ENCODE measurements at regions of chr4 and their contacts with region 1.

Region 1: DNA sequence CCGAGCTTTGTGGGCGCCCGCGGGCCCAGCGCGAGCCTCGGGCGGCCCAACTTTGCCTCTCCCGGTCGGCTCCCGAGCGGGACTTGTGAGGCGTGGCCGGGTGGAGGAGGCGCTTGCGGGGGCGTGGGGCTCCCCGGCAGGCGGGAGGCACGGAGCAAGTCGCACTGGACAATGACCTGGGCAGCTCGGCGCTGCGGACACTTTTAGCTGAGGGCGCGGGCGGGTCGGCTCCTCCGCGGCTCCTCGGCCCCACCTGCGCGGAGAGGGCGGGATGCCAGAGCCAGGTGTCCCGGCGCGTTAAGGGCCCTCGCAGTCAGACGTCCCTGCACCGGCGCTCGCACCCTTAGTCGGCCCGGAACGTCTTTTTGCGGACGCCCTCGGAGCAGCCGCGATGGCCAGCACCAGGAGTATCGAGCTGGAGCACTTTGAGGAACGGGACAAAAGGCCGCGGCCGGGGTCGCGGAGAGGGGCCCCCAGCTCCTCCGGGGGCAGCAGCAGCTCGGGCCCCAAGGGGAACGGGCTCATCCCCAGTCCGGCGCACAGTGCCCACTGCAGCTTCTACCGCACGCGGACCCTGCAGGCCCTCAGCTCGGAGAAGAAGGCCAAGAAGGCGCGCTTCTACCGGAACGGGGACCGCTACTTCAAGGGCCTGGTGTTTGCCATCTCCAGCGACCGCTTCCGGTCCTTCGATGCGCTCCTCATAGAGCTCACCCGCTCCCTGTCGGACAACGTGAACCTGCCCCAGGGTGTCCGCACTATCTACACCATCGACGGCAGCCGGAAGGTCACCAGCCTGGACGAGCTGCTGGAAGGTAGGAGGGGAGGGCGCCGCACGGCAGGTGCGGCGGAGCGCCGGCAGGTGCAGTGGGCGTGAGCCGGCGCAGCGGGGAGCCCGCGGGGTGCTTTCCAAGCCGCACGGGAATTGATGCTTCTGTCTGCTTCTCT is 664 bp downstream of the DCLK2 start:
- DNase-seq: peak; percentile 38 to 51
- H3K4me3 ChIP-seq: peak overlapping the region; percentile 50
- H3K4me3 Mint-ChIP-seq: peak overlapping the region; percentile 65
- H3K27ac Mint-ChIP-seq: no peak overlapping the region
- H3K4me1 ChIP-seq: peaks cover 25% of the 10 kb centered on the region
- H3K4me1 Mint-ChIP-seq: no peaks in the 10 kb centered on the region
- H3K27me3 ChIP-seq: peaks cover 2% of the 10 kb centered on the region; the same call in 1 of the 2 replicates
- H3K27me3 Mint-ChIP-seq: no peaks in the 10 kb centered on the region
- CTCF ChIP-seq: peak in 1 of 2 experiments; percentile 5

Region 2: DNA sequence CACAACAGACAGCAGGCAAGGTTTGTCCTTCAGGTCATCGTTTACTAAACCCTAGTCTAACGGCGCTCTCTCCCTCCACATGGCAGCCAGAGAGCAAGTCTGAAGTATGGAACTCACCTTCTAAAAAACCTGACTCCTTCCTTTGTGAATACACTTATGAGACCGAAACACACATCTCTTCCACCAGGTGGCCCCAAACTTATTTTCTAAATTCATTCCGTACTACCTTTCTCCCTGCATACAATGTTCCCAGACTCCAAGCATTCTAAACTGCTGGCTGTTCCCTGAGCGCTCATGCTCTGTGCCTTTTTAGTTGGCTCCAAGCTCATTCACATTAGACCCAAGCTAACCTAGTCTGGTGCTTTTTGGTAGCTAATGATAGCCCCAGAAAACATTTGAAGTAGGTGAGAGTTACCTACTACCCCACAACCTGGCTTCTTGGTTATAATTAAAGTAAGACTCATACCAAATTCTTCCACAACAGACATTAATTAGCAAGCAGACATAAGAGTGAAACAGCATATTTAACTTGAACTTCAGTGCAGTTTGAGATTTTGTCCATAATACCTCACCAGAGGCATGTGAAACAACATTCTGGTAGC is 68.3 kb before region 1 on chr4:
- CTCF ChIA-PET with region 1: no interaction called
- POLR2A ChIA-PET with region 1: no interaction called
- intact Hi-C with region 1: loop called (anchors 2 kb)
- DNase-seq: peak; percentile 42 to 47
- H3K4me3 ChIP-seq: no peak overlapping the region
- H3K4me3 Mint-ChIP-seq: no peak overlapping the region
- H3K27ac Mint-ChIP-seq: no peak overlapping the region
- H3K4me1 ChIP-seq: no peaks in the 10 kb centered on the region
- H3K4me1 Mint-ChIP-seq: no peaks in the 10 kb centered on the region
- H3K27me3 ChIP-seq: no peaks in the 10 kb centered on the region; the same call in none of the 2 replicates
- H3K27me3 Mint-ChIP-seq: no peaks in the 10 kb centered on the region
- CTCF ChIP-seq: peak; percentile 21 to 53

Region 3: GRCh38 chr4:150045410-150045809 is 33.5 kb before region 1 on chr4:
- CTCF ChIA-PET with region 1: no interaction called
- POLR2A ChIA-PET with region 1: no interaction called
- intact Hi-C with region 1: no loop called
- DNase-seq: no peak
- H3K4me3 ChIP-seq: no peak overlapping the region
- H3K4me3 Mint-ChIP-seq: no peak overlapping the region
- H3K27ac Mint-ChIP-seq: no peak overlapping the region
- H3K4me1 ChIP-seq: no peaks in the 10 kb centered on the region
- H3K4me1 Mint-ChIP-seq: no peaks in the 10 kb centered on the region
- H3K27me3 ChIP-seq: no peaks in the 10 kb centered on the region
- H3K27me3 Mint-ChIP-seq: peaks cover 3% of the 10 kb centered on the region
- CTCF ChIP-seq: no peak

Region 4: GRCh38 chr4:150055467-150055866 is 23.4 kb before region 1 on chr4:
- CTCF ChIA-PET with region 1: no interaction called
- POLR2A ChIA-PET with region 1: no interaction called
- intact Hi-C with region 1: loop called (anchors 2 kb)
- DNase-seq: peak in 1 of 2 experiments; percentile 46
- H3K4me3 ChIP-seq: no peak overlapping the region
- H3K4me3 Mint-ChIP-seq: no peak overlapping the region
- H3K27ac Mint-ChIP-seq: no peak overlapping the region
- H3K4me1 ChIP-seq: 0 out of 2 replicates have a peak, but pooled peaks cover 3% of the 10 kb centered on the region
- H3K4me1 Mint-ChIP-seq: no peaks in the 10 kb centered on the region
- H3K27me3 ChIP-seq: no peaks in the 10 kb centered on the region
- H3K27me3 Mint-ChIP-seq: no peaks in the 10 kb centered on the region
- CTCF ChIP-seq: no peak

Region 5: DNA sequence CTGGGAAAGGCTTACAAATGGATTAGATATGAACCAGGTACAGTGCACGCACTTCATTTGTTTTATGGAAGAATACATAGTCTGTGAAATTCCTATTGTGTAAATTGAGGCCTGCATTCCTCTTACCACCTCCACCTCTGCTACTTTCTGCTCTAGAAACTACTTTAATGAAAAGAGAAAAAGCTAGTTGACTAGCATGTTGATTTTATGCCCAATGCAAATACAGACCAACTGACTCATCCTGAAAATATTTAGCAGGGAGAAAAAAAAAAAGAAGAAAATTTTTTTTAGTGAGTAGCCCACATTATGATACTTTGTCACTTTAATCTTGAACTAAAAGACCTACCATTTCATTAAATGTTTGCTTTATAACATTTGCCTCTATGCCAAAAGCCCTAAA is 40.6 kb after region 1 on chr4:
- CTCF ChIA-PET with region 1: no interaction called
- POLR2A ChIA-PET with region 1: no interaction called
- intact Hi-C with region 1: loop called (anchors 2 kb)
- DNase-seq: peak in 1 of 2 experiments; percentile 14
- H3K4me3 ChIP-seq: no peak overlapping the region
- H3K4me3 Mint-ChIP-seq: no peak overlapping the region
- H3K27ac Mint-ChIP-seq: peak overlapping the region; percentile 50
- H3K4me1 ChIP-seq: peaks cover 13% of the 10 kb centered on the region
- H3K4me1 Mint-ChIP-seq: no peaks in the 10 kb centered on the region
- H3K27me3 ChIP-seq: no peaks in the 10 kb centered on the region
- H3K27me3 Mint-ChIP-seq: no peaks in the 10 kb centered on the region
- CTCF ChIP-seq: no peak

Region 6: DNA sequence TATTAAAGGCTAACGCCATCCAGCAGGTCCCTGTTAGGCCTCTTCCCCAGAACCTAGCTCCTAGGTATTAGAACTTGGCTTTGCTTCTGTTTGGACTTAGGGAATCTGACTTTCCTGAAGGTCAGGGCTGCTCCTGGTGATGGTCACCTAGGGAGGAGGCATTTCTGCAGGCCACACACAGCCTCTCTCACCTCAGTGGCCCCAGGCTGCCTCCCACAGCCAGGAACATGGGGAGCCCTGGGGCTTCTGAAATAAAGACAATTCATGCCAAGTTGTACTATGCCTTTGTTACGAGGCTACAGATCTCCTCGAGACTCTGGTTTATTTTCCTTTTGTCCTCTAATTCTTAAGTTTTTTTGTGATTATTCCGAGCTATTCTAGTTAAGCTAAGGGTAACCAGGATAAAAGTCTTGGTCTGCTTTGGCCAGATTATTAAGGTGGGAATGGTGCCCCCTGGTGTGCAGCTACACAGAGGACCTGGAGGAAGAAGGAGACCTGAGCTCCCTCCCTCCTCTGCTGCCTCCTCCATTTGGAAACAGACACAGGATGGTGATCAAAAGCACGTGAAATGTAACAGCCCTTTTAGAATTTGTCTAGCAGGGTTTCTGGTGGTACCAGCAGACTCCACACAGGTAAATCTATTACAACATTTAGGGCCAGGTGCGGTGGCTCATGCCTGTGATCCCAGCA is 130.4 kb after region 1 on chr4:
- CTCF ChIA-PET with region 1: interaction called, 8 read pairs
- POLR2A ChIA-PET with region 1: no interaction called
- intact Hi-C with region 1: loop called (anchors 2 kb)
- DNase-seq: peak; percentile 68 to 71
- H3K4me3 ChIP-seq: no peak overlapping the region
- H3K4me3 Mint-ChIP-seq: no peak overlapping the region
- H3K27ac Mint-ChIP-seq: no peak overlapping the region
- H3K4me1 ChIP-seq: no peaks in the 10 kb centered on the region
- H3K4me1 Mint-ChIP-seq: no peaks in the 10 kb centered on the region
- H3K27me3 ChIP-seq: no peaks in the 10 kb centered on the region
- H3K27me3 Mint-ChIP-seq: no peaks in the 10 kb centered on the region
- CTCF ChIP-seq: peak; percentile 34 to 63